ENCODE measurements at regions of chr14 and their contacts with region 1.

Region 1: GRCh38 chr14:70640938-70641547 is 673 bp upstream of the TTC9 start:
- DNase-seq: peak; percentile 78 to 91
- ATAC-seq: peak; percentile 93 to 95
- H3K4me3 ChIP-seq: peak overlapping the region; percentile 68 to 78 (median 73)
- H3K27ac ChIP-seq: peak overlapping the region; percentile 84 to 91 (median 88)
- H3K4me1 ChIP-seq: peaks cover 16 to 18% of the 10 kb centered on the region in 2 donors
- H3K27me3 ChIP-seq: peaks cover 0 to 4% (median 0%) of the 10 kb centered on the region in 3 donors
- CTCF ChIP-seq: no peak
- POLR2A ChIP-seq: peak; percentile 66 to 72

Region 2: DNA sequence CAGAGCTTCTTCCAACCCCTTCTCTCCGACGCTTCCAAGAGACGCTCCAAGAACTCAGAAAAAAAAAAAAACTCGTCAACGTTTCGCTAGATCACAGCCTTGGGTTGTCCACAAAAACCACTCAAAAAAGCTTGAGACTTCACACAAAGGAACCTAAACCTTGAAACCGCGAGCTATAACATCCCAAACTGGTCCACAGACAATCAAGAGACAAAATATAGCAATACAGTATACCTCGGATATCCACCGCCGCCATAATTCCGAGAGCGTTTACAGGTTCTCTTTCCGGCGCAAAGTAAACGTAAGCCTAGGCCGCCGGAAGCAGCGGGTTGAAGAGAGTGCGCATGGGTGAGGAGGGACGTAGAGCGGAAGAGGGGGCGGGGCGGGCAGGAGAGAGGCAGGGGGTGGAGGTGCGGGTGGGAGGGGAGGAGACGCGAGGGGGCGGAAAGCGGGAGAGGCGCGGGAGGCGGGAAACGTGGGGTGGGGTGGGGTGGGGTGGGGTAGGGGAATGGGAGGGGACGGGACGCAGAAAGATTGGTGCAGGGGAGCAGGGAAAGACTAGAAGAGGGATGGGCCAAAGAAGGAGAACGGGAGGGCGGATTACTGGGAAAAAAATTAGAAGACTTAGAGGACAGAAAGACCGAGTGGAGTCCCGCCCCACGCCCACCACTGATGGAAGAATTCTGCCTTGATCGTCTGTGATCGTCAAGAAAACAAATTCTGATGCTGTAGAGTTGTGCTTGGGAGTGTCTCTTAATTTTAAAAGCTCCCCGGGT is 40.5 kb before region 1 on chr14 and contains the start of gene MED6:
- in situ Hi-C with region 1: no loop called
- intact Hi-C with region 1: loop called (anchors 1 kb)
- DNase-seq: peak; percentile 87 to 91
- ATAC-seq: peak; percentile 98 to 100
- H3K4me3 ChIP-seq: peak within 1 kb of the TSS; percentile 77 to 98 (median 92)
- H3K27ac ChIP-seq: peak within 1 kb of the TSS; percentile 78 to 89 (median 80)
- H3K4me1 ChIP-seq: peaks cover 15 to 18% of the 10 kb centered on the region in 2 donors
- H3K27me3 ChIP-seq: no peaks in the 10 kb centered on the region
- CTCF ChIP-seq: no peak
- POLR2A ChIP-seq: peak in 1 of 2 donors; percentile 31
- total RNA-seq, gene MED6: 13.9 to 25.0 (median 20.2) TPM

Region 3: DNA sequence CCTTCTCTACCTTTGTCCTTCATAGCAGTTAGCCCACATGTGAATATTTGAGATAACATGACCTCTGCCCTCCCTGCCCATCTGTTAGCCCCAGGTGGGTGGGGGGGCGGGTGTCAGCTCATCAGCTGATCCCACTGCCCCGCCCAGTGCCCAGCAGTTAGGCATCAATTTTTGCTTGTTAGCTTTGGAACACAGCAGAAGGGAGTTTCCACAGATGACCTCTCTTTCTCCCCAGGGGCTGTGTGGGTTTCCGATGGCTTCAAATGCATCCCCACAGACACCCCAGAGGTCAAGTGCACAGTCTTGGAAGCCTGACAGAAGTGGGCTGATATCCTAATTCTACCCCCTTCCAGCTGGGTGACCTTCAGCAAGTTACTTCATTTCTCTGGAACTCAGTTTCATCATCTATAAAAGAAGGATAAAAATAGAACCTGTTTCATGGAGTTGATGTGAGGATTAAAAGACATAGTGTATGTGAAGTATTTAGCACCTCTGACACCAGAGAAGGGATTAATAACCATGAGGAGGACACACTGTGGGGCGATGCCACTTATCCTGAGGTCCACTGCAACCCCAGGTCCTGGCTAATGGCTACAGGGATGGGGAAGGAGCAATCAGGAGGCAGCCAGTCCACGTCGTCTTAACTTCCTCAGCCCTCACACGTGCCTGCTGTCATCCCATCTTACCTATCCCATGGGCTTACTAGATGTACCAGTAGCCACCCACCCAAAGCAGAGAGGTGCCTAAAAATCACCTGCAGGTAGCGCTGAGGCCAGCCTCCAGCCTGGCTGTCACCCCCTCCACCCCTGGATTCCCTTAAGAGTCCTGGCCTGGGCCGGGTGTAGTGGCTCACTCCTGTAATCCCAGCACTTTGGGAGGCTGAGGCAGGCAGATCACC is 22.8 kb after region 1 on chr14:
- in situ Hi-C with region 1: no loop called
- intact Hi-C with region 1: loop called (anchors 1 kb)
- DNase-seq: peak in 1 of 2 donors; percentile 18
- ATAC-seq: peak; percentile 80 to 92
- H3K4me3 ChIP-seq: no peak overlapping the region
- H3K27ac ChIP-seq: peak overlapping the region in 3 of 4 donors; percentile 1 to 73 (median 52)
- H3K4me1 ChIP-seq: peaks cover 14 to 40% of the 10 kb centered on the region in 2 donors
- H3K27me3 ChIP-seq: no peaks in the 10 kb centered on the region
- CTCF ChIP-seq: no peak
- POLR2A ChIP-seq: no peak

Region 4: GRCh38 chr14:70714055-70714621 is 73.1 kb after region 1 on chr14:
- in situ Hi-C with region 1: no loop called
- intact Hi-C with region 1: loop called (anchors 5 kb)
- DNase-seq: no peak
- ATAC-seq: peak in 1 of 2 donors; percentile 21
- H3K4me3 ChIP-seq: no peak overlapping the region
- H3K27ac ChIP-seq: no peak overlapping the region
- H3K4me1 ChIP-seq: no peaks in the 10 kb centered on the region
- H3K27me3 ChIP-seq: no peaks in the 10 kb centered on the region
- CTCF ChIP-seq: peak; percentile 46 to 64 (median 58)
- POLR2A ChIP-seq: no peak

Region 5: DNA sequence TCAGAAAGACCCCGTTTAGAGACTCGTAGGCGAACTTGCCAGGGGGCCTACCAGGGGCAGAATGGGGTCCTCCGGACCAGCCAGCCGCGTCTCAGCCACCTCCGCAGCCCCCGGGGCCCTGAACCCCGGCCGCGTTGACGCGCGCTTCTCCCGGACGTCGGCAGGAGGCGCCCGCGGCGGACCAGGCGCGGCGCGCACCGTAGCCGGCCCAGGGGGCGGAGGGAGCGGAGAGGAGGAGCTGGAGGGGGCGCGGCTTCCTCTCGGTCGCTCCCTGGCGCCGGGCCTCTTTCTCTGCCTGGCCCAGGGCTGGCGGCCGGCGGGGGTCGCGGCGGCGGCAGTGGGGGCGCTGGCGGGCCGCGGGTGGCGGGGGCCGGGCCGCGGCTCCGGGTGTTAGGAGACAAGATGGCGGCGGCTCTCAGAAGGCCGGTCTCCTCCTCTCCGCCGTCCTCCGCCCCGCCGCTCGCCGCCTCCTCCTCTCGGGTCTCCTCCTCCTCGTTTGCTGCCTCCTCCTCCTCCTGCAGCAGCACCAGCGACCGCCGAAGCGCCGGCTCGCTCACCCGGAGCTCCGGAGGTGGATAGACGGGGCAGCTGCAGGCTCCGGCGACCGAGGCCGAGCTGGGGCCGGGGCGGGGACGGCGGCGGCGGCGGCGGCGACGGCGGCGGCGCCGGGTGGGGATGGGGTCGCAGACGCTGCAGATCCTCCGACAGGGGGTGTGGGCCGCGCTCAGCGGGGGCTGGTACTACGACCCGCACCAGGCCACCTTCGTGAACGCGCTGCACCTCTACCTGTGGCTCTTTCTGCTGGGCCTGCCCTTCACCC is 266.3 kb after region 1 on chr14 and contains the start of gene PCNX1:
- in situ Hi-C with region 1: no loop called
- intact Hi-C with region 1: loop called (anchors 10 kb)
- DNase-seq: peak; percentile 72 to 83
- ATAC-seq: peak; percentile 81
- H3K4me3 ChIP-seq: peak within 1 kb of the TSS; percentile 75 to 99 (median 92)
- H3K27ac ChIP-seq: peak within 1 kb of the TSS; percentile 82 to 97 (median 88)
- H3K4me1 ChIP-seq: peaks cover 24 to 34% of the 10 kb centered on the region in 2 donors
- H3K27me3 ChIP-seq: no peaks in the 10 kb centered on the region
- CTCF ChIP-seq: peak; percentile 74 to 95 (median 94)
- POLR2A ChIP-seq: peak; percentile 72 to 73
- total RNA-seq, gene PCNX1: 34.4 to 64.5 (median 42.0) TPM

Measured in gastrocnemius medialis (tissue), 4 donors.